ENCODE measurements at regions of chr4 and their contacts with region 1.

Region 1: GRCh38 chr4:151729731-151730559 is 30.9 kb downstream of the GATB start:
- DNase-seq: peak in 1 of 2 experiments; percentile 49
- H3K4me3 ChIP-seq: no peak overlapping the region
- H3K27ac ChIP-seq: peak overlapping the region; percentile 34; the same call in 1 of the 2 replicates
- H3K4me1 ChIP-seq: peaks cover 13% of the 10 kb centered on the region; the same call in 1 of the 2 replicates
- H3K27me3 ChIP-seq: no peaks in the 10 kb centered on the region
- CTCF ChIP-seq: no peak

Region 2: GRCh38 chr4:151887031-151887815 is 157.3 kb after region 1 on chr4:
- CTCF ChIA-PET with region 1: no interaction called
- POLR2A ChIA-PET with region 1: no interaction called
- intact Hi-C with region 1: no loop called
- DNase-seq: no peak
- H3K4me3 ChIP-seq: no peak overlapping the region
- H3K27ac ChIP-seq: no peak overlapping the region
- H3K4me1 ChIP-seq: no peaks in the 10 kb centered on the region
- H3K27me3 ChIP-seq: no peaks in the 10 kb centered on the region
- CTCF ChIP-seq: no peak

Region 3: GRCh38 chr4:151962138-151962845 is 232.3 kb after region 1 on chr4:
- CTCF ChIA-PET with region 1: no interaction called
- POLR2A ChIA-PET with region 1: no interaction called
- intact Hi-C with region 1: no loop called
- DNase-seq: no peak
- H3K4me3 ChIP-seq: no peak overlapping the region
- H3K27ac ChIP-seq: no peak overlapping the region
- H3K4me1 ChIP-seq: no peaks in the 10 kb centered on the region
- H3K27me3 ChIP-seq: no peaks in the 10 kb centered on the region
- CTCF ChIP-seq: no peak

Region 4: GRCh38 chr4:152101556-152102435 is 371.9 kb after region 1 on chr4:
- CTCF ChIA-PET with region 1: no interaction called
- POLR2A ChIA-PET with region 1: interaction called, 12 read pairs
- intact Hi-C with region 1: no loop called
- DNase-seq: peak in 1 of 2 experiments; percentile 81
- H3K4me3 ChIP-seq: no peak overlapping the region
- H3K27ac ChIP-seq: peak overlapping the region; percentile 47; the same call in 1 of the 2 replicates
- H3K4me1 ChIP-seq: peaks cover 36% of the 10 kb centered on the region
- H3K27me3 ChIP-seq: no peaks in the 10 kb centered on the region
- CTCF ChIP-seq: no peak